ENCODE measurements at regions of chr10 and their contacts with region 1.

Region 1: GRCh38 chr10:50367732-50368131 is 116.4 kb upstream of the ASAH2 start:
- DNase-seq: no peak
- H3K4me3 ChIP-seq: no peak overlapping the region
- H3K27ac ChIP-seq: no peak overlapping the region
- H3K4me1 ChIP-seq: no peaks in the 10 kb centered on the region
- H3K27me3 ChIP-seq: no peaks in the 10 kb centered on the region
- CTCF ChIP-seq: no peak
- EP300 ChIP-seq: no peak
- POLR2A ChIP-seq: no peak

Region 2: GRCh38 chr10:50417886-50418830 is 50.4 kb after region 1 on chr10:
- intact Hi-C with region 1: loop called (anchors 5 kb)
- DNase-seq: peak; percentile 81
- H3K4me3 ChIP-seq: peak overlapping the region; percentile 50 to 75 (median 70)
- H3K27ac ChIP-seq: peak overlapping the region; percentile 74 to 83 (median 79)
- H3K4me1 ChIP-seq: peaks cover 0 to 41% (median 20%) of the 10 kb centered on the region in 4 donors
- H3K27me3 ChIP-seq: no peaks in the 10 kb centered on the region
- CTCF ChIP-seq: no peak
- EP300 ChIP-seq: no peak
- POLR2A ChIP-seq: no peak

Measured in sigmoid colon (tissue), 7 donors.